HEK293 (cell line): ENCODE measurements at regions of chr11 and their contacts with region 1.

Region 1: GRCh38 chr11:22920939-22921565 is 60.8 kb upstream of the CCDC179 start:
- H3K4me3 ChIP-seq: no peak overlapping the region
- H3K27ac ChIP-seq: no peak overlapping the region
- H3K4me1 ChIP-seq: no peaks in the 10 kb centered on the region
- CTCF ChIP-seq: no peak

Region 2: GRCh38 chr11:22730319-22730718 is 190.7 kb before region 1 on chr11:
- CTCF ChIA-PET with region 1: no interaction called
- POLR2A ChIA-PET with region 1: no interaction called
- H3K4me3 ChIP-seq: no peak overlapping the region
- H3K27ac ChIP-seq: no peak overlapping the region
- H3K4me1 ChIP-seq: no peaks in the 10 kb centered on the region
- CTCF ChIP-seq: no peak

Region 3: GRCh38 chr11:22763166-22763565 is 157.9 kb before region 1 on chr11:
- CTCF ChIA-PET with region 1: no interaction called
- POLR2A ChIA-PET with region 1: no interaction called
- H3K4me3 ChIP-seq: no peak overlapping the region
- H3K27ac ChIP-seq: no peak overlapping the region
- H3K4me1 ChIP-seq: no peaks in the 10 kb centered on the region
- CTCF ChIP-seq: no peak

Region 4: GRCh38 chr11:23041001-23041503 is 120.0 kb after region 1 on chr11:
- CTCF ChIA-PET with region 1: interaction called, 12 read pairs
- POLR2A ChIA-PET with region 1: no interaction called
- H3K4me3 ChIP-seq: no peak overlapping the region
- H3K27ac ChIP-seq: no peak overlapping the region
- H3K4me1 ChIP-seq: no peaks in the 10 kb centered on the region
- CTCF ChIP-seq: no peak